ENCODE measurements at regions of chr7 and their contacts with region 1.

Region 1: DNA sequence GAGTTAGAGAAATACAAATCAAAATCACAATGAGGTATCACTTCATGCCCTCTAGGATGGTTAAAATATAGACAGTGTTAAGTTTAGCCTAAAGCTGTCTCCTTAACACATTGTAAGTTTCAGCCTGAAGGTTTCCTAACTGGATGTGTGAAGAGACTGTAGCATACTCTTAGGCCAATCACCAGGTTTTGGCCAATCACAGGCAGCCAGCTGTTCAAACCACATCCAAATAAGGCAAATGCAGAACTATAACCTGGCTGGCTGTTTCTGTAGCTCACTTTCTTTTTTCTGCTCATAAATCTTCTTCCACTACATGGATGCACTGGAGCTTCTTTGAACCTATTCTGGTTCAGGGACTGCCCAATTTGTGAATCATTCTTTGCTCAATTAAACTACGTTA is 19.7 kb downstream of the ESYT2 start:
- DNase-seq: no peak
- H3K4me3 ChIP-seq: no peak overlapping the region
- H3K4me3 Mint-ChIP-seq: peak overlapping the region; percentile 42 to 84 (median 66)
- H3K27ac ChIP-seq: no peak overlapping the region
- H3K27ac Mint-ChIP-seq: peak overlapping the region; percentile 87 to 98 (median 94)
- H3K4me1 ChIP-seq: peaks cover 70% of the 10 kb centered on the region
- H3K4me1 Mint-ChIP-seq: peaks cover 57 to 89% (median 73%) of the 10 kb centered on the region in 4 donors
- H3K27me3 ChIP-seq: no peaks in the 10 kb centered on the region
- H3K27me3 Mint-ChIP-seq: no peaks in the 10 kb centered on the region

Region 2: GRCh38 chr7:156984174-156984891 is 1825.3 kb before region 1 on chr7:
- CTCF ChIA-PET with region 1: no interaction called
- POLR2A ChIA-PET with region 1: no interaction called
- intact Hi-C with region 1: no loop called
- DNase-seq: no peak
- H3K4me3 ChIP-seq: no peak overlapping the region
- H3K4me3 Mint-ChIP-seq: no peak overlapping the region
- H3K27ac ChIP-seq: no peak overlapping the region
- H3K27ac Mint-ChIP-seq: no peak overlapping the region
- H3K4me1 ChIP-seq: no peaks in the 10 kb centered on the region
- H3K4me1 Mint-ChIP-seq: no peaks in the 10 kb centered on the region
- H3K27me3 ChIP-seq: no peaks in the 10 kb centered on the region
- H3K27me3 Mint-ChIP-seq: peaks cover 1 to 2% of the 10 kb centered on the region in 2 donors

Region 3: GRCh38 chr7:158782761-158783401 is 26.7 kb before region 1 on chr7:
- CTCF ChIA-PET with region 1: interaction called, 4 read pairs
- POLR2A ChIA-PET with region 1: interaction called, 11 read pairs
- intact Hi-C with region 1: no loop called
- DNase-seq: peak in 2 of 5 donors; percentile 13 to 42
- H3K4me3 ChIP-seq: no peak overlapping the region
- H3K4me3 Mint-ChIP-seq: no peak overlapping the region
- H3K27ac ChIP-seq: no peak overlapping the region
- H3K27ac Mint-ChIP-seq: no peak overlapping the region
- H3K4me1 ChIP-seq: peaks cover 27% of the 10 kb centered on the region
- H3K4me1 Mint-ChIP-seq: peaks cover 3 to 23% (median 14%) of the 10 kb centered on the region in 4 donors
- H3K27me3 ChIP-seq: no peaks in the 10 kb centered on the region
- H3K27me3 Mint-ChIP-seq: no peaks in the 10 kb centered on the region

Region 4: GRCh38 chr7:158795272-158795671 is 14.3 kb before region 1 on chr7:
- CTCF ChIA-PET with region 1: interaction called, 4 read pairs
- POLR2A ChIA-PET with region 1: interaction called, 13 read pairs
- intact Hi-C with region 1: no loop called
- DNase-seq: no peak
- H3K4me3 ChIP-seq: no peak overlapping the region
- H3K4me3 Mint-ChIP-seq: no peak overlapping the region
- H3K27ac ChIP-seq: no peak overlapping the region
- H3K27ac Mint-ChIP-seq: no peak overlapping the region
- H3K4me1 ChIP-seq: peaks cover 16% of the 10 kb centered on the region
- H3K4me1 Mint-ChIP-seq: peaks cover 13 to 34% (median 21%) of the 10 kb centered on the region in 4 donors
- H3K27me3 ChIP-seq: no peaks in the 10 kb centered on the region
- H3K27me3 Mint-ChIP-seq: no peaks in the 10 kb centered on the region

Region 5: GRCh38 chr7:158824028-158824427 is 14.4 kb after region 1 on chr7:
- CTCF ChIA-PET with region 1: interaction called, 12 read pairs
- POLR2A ChIA-PET with region 1: interaction called, 255 read pairs
- intact Hi-C with region 1: loop called (anchors 2 kb)
- DNase-seq: peak; percentile 77 to 88 (median 82)
- H3K4me3 ChIP-seq: no peak overlapping the region
- H3K4me3 Mint-ChIP-seq: peak overlapping the region; percentile 2 to 85 (median 74)
- H3K27ac ChIP-seq: peak overlapping the region; percentile 48
- H3K27ac Mint-ChIP-seq: peak overlapping the region; percentile 88 to 96 (median 93)
- H3K4me1 ChIP-seq: peaks cover 85% of the 10 kb centered on the region
- H3K4me1 Mint-ChIP-seq: peaks cover 46 to 76% (median 62%) of the 10 kb centered on the region in 4 donors
- H3K27me3 ChIP-seq: no peaks in the 10 kb centered on the region
- H3K27me3 Mint-ChIP-seq: no peaks in the 10 kb centered on the region

Region 6: DNA sequence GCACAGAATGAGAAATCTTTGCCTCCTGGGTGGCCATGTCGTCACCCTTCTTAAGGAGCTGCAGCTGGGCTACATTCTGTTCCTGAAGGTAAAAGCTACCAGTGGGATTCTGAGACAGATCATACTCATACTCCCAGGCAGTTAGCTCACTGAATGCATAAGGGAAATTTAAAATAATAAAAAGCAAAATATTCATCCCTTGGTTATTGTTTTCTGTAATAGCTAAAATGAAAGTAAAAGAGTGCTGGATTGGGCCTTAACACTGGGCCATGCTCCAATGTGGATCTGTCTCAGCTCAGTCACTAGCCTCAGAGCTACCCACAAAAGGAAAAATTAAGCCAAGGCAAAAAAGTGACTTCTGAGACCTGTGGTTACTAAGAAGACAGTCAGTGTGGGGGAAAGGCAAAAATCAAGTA is 37.9 kb after region 1 on chr7:
- CTCF ChIA-PET with region 1: no interaction called
- POLR2A ChIA-PET with region 1: interaction called, 14 read pairs
- intact Hi-C with region 1: no loop called
- DNase-seq: peak in 1 of 5 donors; percentile 46
- H3K4me3 ChIP-seq: peak overlapping the region in 1 of 2 donors; percentile 51
- H3K4me3 Mint-ChIP-seq: peak overlapping the region; percentile 78 to 97 (median 86)
- H3K27ac ChIP-seq: peak overlapping the region; percentile 31
- H3K27ac Mint-ChIP-seq: peak overlapping the region; percentile 68 to 99 (median 98)
- H3K4me1 ChIP-seq: peaks cover 15% of the 10 kb centered on the region
- H3K4me1 Mint-ChIP-seq: peaks cover 19 to 39% (median 26%) of the 10 kb centered on the region in 4 donors
- H3K27me3 ChIP-seq: no peaks in the 10 kb centered on the region
- H3K27me3 Mint-ChIP-seq: no peaks in the 10 kb centered on the region

Region 7: GRCh38 chr7:158856883-158857668 is 47.5 kb after region 1 on chr7:
- CTCF ChIA-PET with region 1: interaction called, 3 read pairs
- POLR2A ChIA-PET with region 1: interaction called, 5 read pairs
- intact Hi-C with region 1: loop called (anchors 1 kb)
- DNase-seq: peak in 1 of 5 donors; percentile 6
- H3K4me3 ChIP-seq: peak overlapping the region; percentile 80 to 81
- H3K4me3 Mint-ChIP-seq: peak overlapping the region; percentile 75 to 98 (median 90)
- H3K27ac ChIP-seq: peak overlapping the region; percentile 77
- H3K27ac Mint-ChIP-seq: peak overlapping the region; percentile 46 to 92 (median 79)
- H3K4me1 ChIP-seq: peaks cover 19% of the 10 kb centered on the region
- H3K4me1 Mint-ChIP-seq: peaks cover 18 to 34% (median 23%) of the 10 kb centered on the region in 4 donors
- H3K27me3 ChIP-seq: no peaks in the 10 kb centered on the region
- H3K27me3 Mint-ChIP-seq: no peaks in the 10 kb centered on the region

Region 8: GRCh38 chr7:158863611-158864506 is 54.3 kb after region 1 on chr7:
- CTCF ChIA-PET with region 1: interaction called, 3 read pairs
- POLR2A ChIA-PET with region 1: interaction called, 11 read pairs
- intact Hi-C with region 1: no loop called
- DNase-seq: peak; percentile 21 to 49 (median 28)
- H3K4me3 ChIP-seq: peak overlapping the region; percentile 17 to 50
- H3K4me3 Mint-ChIP-seq: peak overlapping the region; percentile 86 to 98 (median 93)
- H3K27ac ChIP-seq: peak overlapping the region; percentile 55
- H3K27ac Mint-ChIP-seq: peak overlapping the region; percentile 60 to 98 (median 95)
- H3K4me1 ChIP-seq: peaks cover 17% of the 10 kb centered on the region
- H3K4me1 Mint-ChIP-seq: peaks cover 19 to 37% (median 33%) of the 10 kb centered on the region in 4 donors
- H3K27me3 ChIP-seq: no peaks in the 10 kb centered on the region
- H3K27me3 Mint-ChIP-seq: no peaks in the 10 kb centered on the region

Region 9: GRCh38 chr7:159158888-159159405 is 349.4 kb after region 1 on chr7:
- CTCF ChIA-PET with region 1: no interaction called
- POLR2A ChIA-PET with region 1: no interaction called
- intact Hi-C with region 1: no loop called
- DNase-seq: no peak
- H3K4me3 ChIP-seq: no peak overlapping the region
- H3K4me3 Mint-ChIP-seq: no peak overlapping the region
- H3K27ac ChIP-seq: no peak overlapping the region
- H3K27ac Mint-ChIP-seq: no peak overlapping the region
- H3K4me1 ChIP-seq: no peaks in the 10 kb centered on the region
- H3K4me1 Mint-ChIP-seq: no peaks in the 10 kb centered on the region
- H3K27me3 ChIP-seq: no peaks in the 10 kb centered on the region
- H3K27me3 Mint-ChIP-seq: peaks cover 0 to 1% of the 10 kb centered on the region in 2 donors